ENCODE measurements at regions of chr12 and their contacts with region 1.

Region 1: DNA sequence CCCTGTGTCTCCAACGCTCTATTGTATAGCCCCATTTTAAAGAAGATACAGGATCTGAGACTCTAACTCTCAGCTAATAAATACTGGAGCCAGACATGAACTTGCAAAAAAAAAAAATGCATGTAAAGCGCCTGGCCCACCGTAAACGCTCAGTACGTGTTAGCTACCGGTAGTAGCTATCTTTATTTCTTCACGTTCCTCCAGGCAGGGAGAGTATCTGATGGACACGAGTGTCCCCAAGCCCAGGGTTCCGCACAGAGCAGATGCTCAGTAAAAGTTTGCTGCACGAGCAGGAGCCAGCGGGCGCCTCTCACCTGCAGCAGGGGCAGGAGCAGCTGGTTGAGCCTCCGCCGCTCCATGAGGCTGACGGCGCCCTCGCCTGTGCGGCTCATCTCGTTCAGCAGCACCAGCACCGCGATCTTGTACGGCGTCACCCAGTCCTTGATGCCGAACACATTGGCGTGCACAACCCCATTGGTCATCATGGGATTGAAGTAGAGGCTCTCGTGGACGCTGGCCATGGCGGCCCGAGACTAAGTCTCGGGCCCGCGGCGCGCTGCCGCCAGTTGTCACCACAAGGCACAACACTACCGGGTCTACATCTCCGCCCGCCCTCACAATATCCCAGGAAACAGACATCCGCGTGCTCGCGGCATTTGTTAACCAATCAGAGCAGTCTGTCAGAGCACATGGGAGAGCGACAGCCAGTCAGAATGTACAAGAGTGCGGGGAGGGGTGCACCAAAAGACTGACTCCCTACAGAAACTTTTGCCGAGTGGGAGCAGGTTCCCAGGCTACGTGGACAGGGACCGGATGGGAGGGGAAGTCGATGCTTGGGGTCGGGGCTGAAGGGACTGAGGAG is at the start of gene ANAPC5:
- DNase-seq: peak; percentile 99
- H3K4me3 ChIP-seq: peak within 1 kb of the TSS; percentile 70 to 93 (median 83)
- H3K27ac ChIP-seq: peak within 1 kb of the TSS; percentile 78 to 85 (median 83)
- H3K4me1 ChIP-seq: peaks cover 18 to 42% (median 28%) of the 10 kb centered on the region in 4 donors
- H3K27me3 ChIP-seq: no peaks in the 10 kb centered on the region
- CTCF ChIP-seq: no peak
- EP300 ChIP-seq: no peak
- POLR2A ChIP-seq: peak; percentile 9
- total RNA-seq, gene ANAPC5: 70.9 to 81.8 (median 75.5) TPM

Region 2: GRCh38 chr12:121399391-121400331 is 47.6 kb after region 1 on chr12 and contains the start of gene RNF34:
- intact Hi-C with region 1: loop called (anchors 5 kb)
- DNase-seq: peak; percentile 99
- H3K4me3 ChIP-seq: peak within 1 kb of the TSS; percentile 86 to 93 (median 92)
- H3K27ac ChIP-seq: peak within 1 kb of the TSS; percentile 93 to 97 (median 95)
- H3K4me1 ChIP-seq: peaks cover 16 to 40% (median 36%) of the 10 kb centered on the region in 4 donors
- H3K27me3 ChIP-seq: no peaks in the 10 kb centered on the region
- CTCF ChIP-seq: peak in 2 of 3 experiments; percentile 5 to 10
- EP300 ChIP-seq: no peak
- POLR2A ChIP-seq: peak; percentile 90
- total RNA-seq, gene RNF34: 39.6 to 69.9 (median 46.6) TPM

Region 3: DNA sequence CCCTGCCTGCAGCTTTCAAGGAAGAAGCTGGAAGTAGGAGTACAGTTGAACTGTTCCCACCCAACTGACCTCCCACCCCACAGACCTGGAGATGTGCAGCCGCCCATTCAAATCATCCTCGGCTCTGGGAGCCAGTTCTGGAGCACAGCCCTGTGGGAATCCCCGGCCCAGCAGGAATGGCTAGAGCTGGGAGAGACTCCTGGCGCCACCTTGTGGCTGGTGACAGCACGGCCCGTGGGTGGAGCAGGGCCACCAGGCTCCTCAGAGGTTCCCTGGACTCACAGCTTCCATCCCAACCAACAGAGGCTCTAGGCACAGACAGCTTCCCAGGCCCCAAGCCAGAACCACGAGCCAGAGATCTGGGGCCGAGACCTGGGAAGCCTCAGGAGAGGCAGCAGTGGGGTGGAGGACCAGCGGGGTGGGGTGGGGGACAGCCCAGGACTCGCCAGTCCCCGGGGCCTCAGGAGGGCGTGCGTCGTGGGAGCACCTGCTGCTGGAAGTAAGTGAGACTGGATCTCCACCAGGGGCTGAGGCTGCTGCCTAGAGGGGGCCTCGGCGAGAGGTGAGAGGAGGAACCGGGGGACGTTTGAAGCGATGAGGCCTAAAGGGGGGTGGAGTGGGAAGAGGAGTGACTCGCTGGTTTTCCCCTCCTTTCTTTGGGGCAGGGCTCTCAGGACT is 91.3 kb after region 1 on chr12:
- intact Hi-C with region 1: loop called (anchors 5 kb)
- DNase-seq: no peak
- H3K4me3 ChIP-seq: no peak overlapping the region
- H3K27ac ChIP-seq: peak overlapping the region in 1 of 4 donors; percentile 25
- H3K4me1 ChIP-seq: peaks cover 5 to 20% (median 12%) of the 10 kb centered on the region in 4 donors
- H3K27me3 ChIP-seq: no peaks in the 10 kb centered on the region
- CTCF ChIP-seq: peak; percentile 89 to 97 (median 93)
- EP300 ChIP-seq: no peak
- POLR2A ChIP-seq: no peak